GM12878 (cell line): ENCODE measurements at regions of chr12 and their contacts with region 1.

Region 1: DNA sequence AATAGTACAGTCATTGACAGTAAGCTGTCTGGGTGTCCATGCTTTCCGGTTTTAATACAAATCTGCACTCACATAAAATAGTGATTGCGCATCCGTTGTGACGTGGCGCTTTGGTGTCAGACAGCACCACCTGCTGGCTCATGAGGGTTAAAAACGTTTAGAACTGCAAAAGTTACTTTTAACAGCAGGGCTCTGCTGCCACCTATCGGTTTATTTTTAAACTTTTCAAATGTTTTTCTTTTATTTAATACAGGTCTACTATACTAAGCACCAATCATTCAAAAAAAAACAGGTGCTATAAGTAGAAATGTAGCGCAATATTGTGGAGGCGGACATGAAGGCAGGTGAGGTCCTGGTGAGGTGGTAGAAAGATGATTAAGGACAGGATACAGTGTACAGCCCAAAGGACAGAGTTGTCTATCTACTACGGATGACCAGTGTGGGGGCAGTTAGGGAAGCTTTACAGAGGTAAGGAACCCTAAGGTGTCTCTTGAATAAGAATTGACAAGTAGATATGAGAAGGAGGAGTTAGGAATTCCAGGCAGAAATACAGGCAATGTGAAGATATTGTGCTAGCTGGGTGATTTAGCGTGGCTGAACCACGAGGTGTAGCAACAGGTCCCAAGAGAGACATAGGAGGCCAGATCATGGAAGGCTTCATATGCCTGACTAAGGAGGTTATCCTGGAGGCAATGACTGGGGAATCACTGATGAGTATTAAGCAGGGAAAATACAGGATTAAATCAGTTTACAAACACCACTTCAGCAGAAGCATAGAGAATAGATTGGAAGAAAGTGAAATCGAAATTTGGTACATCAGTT is 91.5 kb upstream of the PRB2 start:
- DNase-seq: peak; percentile 43
- ATAC-seq: peak; percentile 94
- H3K4me3 ChIP-seq: no peak overlapping the region
- H3K27ac ChIP-seq: no peak overlapping the region
- H3K4me1 ChIP-seq: no peaks in the 10 kb centered on the region
- H3K27me3 ChIP-seq: no peaks in the 10 kb centered on the region
- CTCF ChIP-seq: peak; percentile 88 to 99 (median 98); a peak in 5 of 6 replicates
- EP300 ChIP-seq: no peak
- POLR2A ChIP-seq: no peak
- RAD21 ChIP-seq: peak; percentile 96

Region 2: GRCh38 chr12:10771132-10771733 is 715.6 kb before region 1 on chr12:
- CTCF ChIA-PET with region 1: interaction called, 27 read pairs
- POLR2A ChIA-PET with region 1: no interaction called
- RAD21 ChIA-PET with region 1: interaction called, 19 read pairs
- SMC1A ChIA-PET with region 1: interaction called, 33 read pairs
- in situ Hi-C with region 1: loop called (anchors 5 kb)
- intact Hi-C with region 1: loop called (anchors 1 kb)
- DNase-seq: no peak
- ATAC-seq: 0 out of 3 replicates have a peak, but pooled peaks have one; percentile 37
- H3K4me3 ChIP-seq: no peak overlapping the region
- H3K27ac ChIP-seq: no peak overlapping the region
- H3K4me1 ChIP-seq: no peaks in the 10 kb centered on the region
- H3K27me3 ChIP-seq: peaks cover 0 to 5% of the 10 kb centered on the region in 2 experiments; a peak in 1 of 4 replicates
- CTCF ChIP-seq: peak; percentile 40 to 66 (median 50); a peak in 5 of 6 replicates
- EP300 ChIP-seq: no peak
- POLR2A ChIP-seq: no peak
- RAD21 ChIP-seq: peak; percentile 77

Region 3: GRCh38 chr12:11228296-11228879 is 258.4 kb before region 1 on chr12:
- CTCF ChIA-PET with region 1: interaction called, 133 read pairs
- POLR2A ChIA-PET with region 1: no interaction called
- RAD21 ChIA-PET with region 1: interaction called, 45 read pairs
- SMC1A ChIA-PET with region 1: interaction called, 42 read pairs
- in situ Hi-C with region 1: loop called (anchors 5 kb)
- intact Hi-C with region 1: loop called (anchors 1 kb)
- DNase-seq: peak; percentile 16
- ATAC-seq: peak; percentile 98
- H3K4me3 ChIP-seq: no peak overlapping the region
- H3K27ac ChIP-seq: no peak overlapping the region
- H3K4me1 ChIP-seq: no peaks in the 10 kb centered on the region
- H3K27me3 ChIP-seq: no peaks in the 10 kb centered on the region
- CTCF ChIP-seq: peak; percentile 76 to 80 (median 79)
- EP300 ChIP-seq: no peak
- POLR2A ChIP-seq: no peak
- RAD21 ChIP-seq: peak; percentile 78

Region 4: DNA sequence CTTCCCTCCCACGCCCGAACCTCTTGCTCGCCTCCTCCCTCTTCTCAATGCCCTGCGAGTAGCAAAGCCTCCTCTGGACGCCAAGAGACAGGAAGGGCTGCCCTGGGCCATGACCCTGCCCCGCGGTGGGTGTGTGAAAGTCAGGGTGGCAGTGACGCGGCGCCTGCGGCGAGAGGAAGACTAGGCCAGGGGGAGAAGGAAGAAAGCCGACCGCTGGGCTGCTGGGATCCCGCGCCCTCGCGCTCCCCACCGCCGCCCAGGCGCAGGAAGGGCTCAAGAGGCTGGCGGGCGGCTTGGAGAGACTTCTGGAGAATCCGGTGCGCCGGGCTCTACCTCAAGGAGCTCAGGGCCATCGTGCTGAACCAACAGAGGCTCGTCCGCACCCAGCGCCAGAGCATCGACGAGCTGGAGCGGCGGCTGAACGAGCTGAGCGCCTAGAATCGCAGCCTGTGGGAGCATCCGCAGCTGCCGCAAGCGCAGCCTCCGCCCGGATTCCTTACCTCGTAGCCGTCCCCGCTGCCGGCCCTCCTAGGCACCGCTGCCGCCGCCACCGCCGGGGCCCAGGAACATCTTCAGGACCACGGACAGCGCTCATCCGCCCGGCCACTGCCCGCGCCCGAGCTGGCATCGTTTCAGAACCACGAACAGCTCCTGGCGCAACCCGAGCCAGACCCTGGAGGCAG is 13.5 kb after region 1 on chr12:
- CTCF ChIA-PET with region 1: interaction called, 13 read pairs
- POLR2A ChIA-PET with region 1: no interaction called
- RAD21 ChIA-PET with region 1: interaction called, 4 read pairs
- SMC1A ChIA-PET with region 1: interaction called, 10 read pairs
- in situ Hi-C with region 1: no loop called
- intact Hi-C with region 1: no loop called
- DNase-seq: no peak
- ATAC-seq: peak; percentile 83
- H3K4me3 ChIP-seq: no peak overlapping the region
- H3K27ac ChIP-seq: no peak overlapping the region
- H3K4me1 ChIP-seq: peaks cover 5% of the 10 kb centered on the region
- H3K27me3 ChIP-seq: peaks cover 0 to 7% of the 10 kb centered on the region in 2 experiments; a peak in 3 of 4 replicates
- CTCF ChIP-seq: no peak
- EP300 ChIP-seq: no peak; a peak in 1 of 4 replicates
- POLR2A ChIP-seq: no peak
- RAD21 ChIP-seq: no peak

Region 5: DNA sequence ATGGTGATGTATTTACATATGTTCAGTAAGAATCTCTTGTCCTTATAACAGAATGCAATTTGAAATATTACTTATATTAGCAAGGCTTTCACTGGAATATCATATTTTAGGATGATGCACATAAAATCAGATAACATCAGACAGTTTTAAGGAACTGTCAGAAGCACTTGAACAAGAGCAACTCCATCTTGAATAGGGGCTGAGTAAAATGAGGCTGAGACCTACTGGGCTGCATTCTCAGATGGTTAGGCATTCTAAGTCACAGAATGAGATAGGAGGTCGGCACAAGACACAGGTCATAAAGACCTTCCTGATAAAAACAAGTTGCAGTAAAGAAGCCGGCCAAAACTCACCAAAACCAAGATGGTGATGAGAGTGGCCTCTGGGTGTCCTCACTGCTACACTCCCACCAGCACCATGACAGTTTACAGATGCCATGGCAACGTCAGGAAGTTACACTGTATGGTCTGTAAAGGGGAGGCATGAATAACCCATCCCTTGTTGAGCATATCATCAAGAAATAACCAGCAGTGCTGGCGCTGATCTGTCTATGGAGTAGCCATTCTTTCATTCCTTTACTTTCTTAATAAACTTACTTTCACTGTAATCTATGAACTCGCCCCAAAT is 135.1 kb after region 1 on chr12:
- CTCF ChIA-PET with region 1: interaction called, 10 read pairs
- POLR2A ChIA-PET with region 1: no interaction called
- RAD21 ChIA-PET with region 1: interaction called, 4 read pairs
- SMC1A ChIA-PET with region 1: interaction called, 5 read pairs
- in situ Hi-C with region 1: no loop called
- intact Hi-C with region 1: no loop called
- DNase-seq: no peak
- ATAC-seq: peak; percentile 64
- H3K4me3 ChIP-seq: no peak overlapping the region
- H3K27ac ChIP-seq: no peak overlapping the region
- H3K4me1 ChIP-seq: no peaks in the 10 kb centered on the region
- H3K27me3 ChIP-seq: no peaks in the 10 kb centered on the region
- CTCF ChIP-seq: peak in 1 of 3 experiments; percentile 8; a peak in 2 of 6 replicates
- EP300 ChIP-seq: no peak
- POLR2A ChIP-seq: no peak
- RAD21 ChIP-seq: peak; percentile 41; the same call in 1 of the 2 replicates